A549 (cell line): ENCODE measurements at regions of chr15 and their contacts with region 1.

Region 1: DNA sequence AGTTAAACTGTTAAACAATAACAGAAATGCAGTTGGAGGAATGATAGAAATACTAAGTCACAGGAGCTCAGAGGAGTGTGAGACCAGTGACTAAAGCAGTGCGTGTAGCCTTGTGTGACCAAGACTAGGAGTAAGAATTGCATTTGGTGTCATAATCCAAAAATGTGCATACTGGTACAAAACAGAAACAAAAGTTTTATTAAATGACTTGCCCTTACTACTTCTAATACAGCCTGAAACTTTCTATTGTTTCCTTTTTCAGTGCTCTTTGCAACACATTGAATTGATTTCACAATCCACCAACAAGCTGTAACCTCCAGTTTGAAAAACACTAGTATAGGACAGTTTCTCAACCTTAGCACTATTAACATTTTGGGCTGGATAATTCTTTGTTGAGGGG is 17.1 kb downstream of the SNX1 start:
- DNase-seq: no peak
- ATAC-seq: no peak
- H3K4me3 ChIP-seq: no peak overlapping the region
- H3K27ac ChIP-seq: no peak overlapping the region
- H3K4me1 ChIP-seq: peaks cover 4% of the 10 kb centered on the region; the same call in 1 of the 3 replicates
- CTCF ChIP-seq: no peak
- EP300 ChIP-seq: no peak
- POLR2A ChIP-seq: no peak
- RAD21 ChIP-seq: no peak

Region 2: DNA sequence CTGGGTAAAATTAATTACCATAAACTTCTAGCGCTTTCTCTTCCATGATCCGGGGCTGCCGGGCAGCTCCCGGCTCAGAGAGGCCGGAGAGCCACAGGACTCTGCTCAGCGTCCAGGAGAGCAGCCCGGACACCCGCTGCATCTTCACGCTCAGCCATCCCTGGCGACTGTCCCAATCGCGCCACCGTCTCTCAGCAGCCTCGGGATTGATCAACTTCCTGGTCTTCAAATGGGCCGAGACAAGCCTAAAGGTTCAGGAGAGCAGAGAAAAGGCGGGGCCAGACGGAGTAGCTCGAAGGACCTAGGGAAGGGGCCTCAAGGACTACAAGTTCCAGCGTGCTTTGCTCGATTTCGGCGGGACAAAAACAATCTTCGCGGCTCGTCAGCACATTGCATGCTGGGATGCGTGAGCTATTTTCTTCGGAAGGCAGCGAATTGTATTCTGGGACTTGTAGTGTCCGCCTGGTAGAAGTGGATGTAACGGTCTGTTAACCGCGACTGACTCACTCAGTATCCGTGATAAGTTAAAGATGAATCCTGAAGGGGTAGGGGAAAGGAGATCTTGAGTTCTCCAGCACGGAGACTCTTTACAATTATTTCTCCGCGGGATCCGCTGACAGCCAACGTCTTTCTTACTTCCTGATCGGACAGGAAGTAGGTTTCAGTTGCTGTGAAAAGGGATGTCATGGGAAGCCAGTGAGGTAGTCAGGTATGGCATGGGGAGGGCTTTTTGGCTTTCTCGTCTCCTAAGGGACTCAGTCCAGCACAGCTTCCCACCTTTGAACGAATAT is 19.1 kb before region 1 on chr15 and contains the start of gene CIAO2A:
- CTCF ChIA-PET with region 1: interaction called, 21 read pairs
- POLR2A ChIA-PET with region 1: no interaction called
- DNase-seq: peak; percentile 96 to 100
- ATAC-seq: peak; percentile 82 to 90
- H3K4me3 ChIP-seq: peak within 1 kb of the TSS; percentile 68
- H3K27ac ChIP-seq: peak within 1 kb of the TSS; percentile 85 to 86
- H3K4me1 ChIP-seq: peaks cover 32% of the 10 kb centered on the region
- CTCF ChIP-seq: no peak
- EP300 ChIP-seq: no peak
- POLR2A ChIP-seq: peak; percentile 82
- RAD21 ChIP-seq: no peak
- polyA plus RNA-seq, gene CIAO2A: 149 and 231 TPM in 2 replicates

Region 3: GRCh38 chr15:64137226-64138220 is 24.6 kb after region 1 on chr15:
- CTCF ChIA-PET with region 1: interaction called, 21 read pairs
- POLR2A ChIA-PET with region 1: no interaction called
- DNase-seq: no peak
- ATAC-seq: peak; percentile 49 to 66; a peak in 5 of 6 replicates
- H3K4me3 ChIP-seq: no peak overlapping the region
- H3K27ac ChIP-seq: no peak overlapping the region
- H3K4me1 ChIP-seq: no peaks in the 10 kb centered on the region
- CTCF ChIP-seq: no peak
- EP300 ChIP-seq: no peak
- POLR2A ChIP-seq: no peak
- RAD21 ChIP-seq: no peak